CD4-positive, alpha-beta T cell (primary cell): ENCODE measurements at regions of chr6 and their contacts with region 1.

Region 1: GRCh38 chr6:118776607-118777549 is 117.1 kb upstream of the ASF1A start:
- DNase-seq: peak; percentile 35 to 84 (median 54)
- ATAC-seq: peak; percentile 94
- H3K4me3 ChIP-seq: no peak overlapping the region
- H3K4me3 Mint-ChIP-seq: peak overlapping the region; percentile 32
- H3K27ac ChIP-seq: no peak overlapping the region
- H3K27ac Mint-ChIP-seq: peak overlapping the region; percentile 4
- H3K4me1 ChIP-seq: peaks cover 11% of the 10 kb centered on the region
- H3K4me1 Mint-ChIP-seq: peaks cover 24% of the 10 kb centered on the region
- H3K27me3 ChIP-seq: no peaks in the 10 kb centered on the region
- H3K27me3 Mint-ChIP-seq: no peaks in the 10 kb centered on the region
- CTCF ChIP-seq: peak; percentile 87

Region 2: DNA sequence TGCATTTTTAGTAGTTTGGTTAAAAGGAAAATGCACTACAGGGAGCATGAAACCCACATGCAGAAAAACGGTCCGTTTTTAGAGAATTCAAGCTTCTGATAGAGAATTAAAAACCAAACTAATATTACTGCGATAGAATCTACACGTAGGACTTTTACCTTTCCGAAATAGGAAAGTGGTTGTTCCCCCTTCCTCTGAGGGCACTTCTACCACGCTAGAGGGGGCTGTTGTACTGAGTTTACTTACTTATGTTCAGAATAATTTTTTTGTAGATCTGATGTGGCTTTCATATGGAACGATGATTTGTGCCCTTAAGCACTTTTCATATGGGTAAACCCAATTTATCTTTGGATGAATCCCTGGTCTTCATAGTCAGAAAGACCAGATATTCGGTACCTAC is 493.1 kb before region 1 on chr6:
- CTCF ChIA-PET with region 1: no interaction called
- POLR2A ChIA-PET with region 1: no interaction called
- intact Hi-C with region 1: loop called in 1 of 2 experiments (anchors 5 kb)
- DNase-seq: peak in 13 of 14 experiments; percentile 9 to 74 (median 38)
- ATAC-seq: peak; percentile 59
- H3K4me3 ChIP-seq: no peak overlapping the region
- H3K4me3 Mint-ChIP-seq: no peak overlapping the region
- H3K27ac ChIP-seq: no peak overlapping the region
- H3K27ac Mint-ChIP-seq: no peak overlapping the region
- H3K4me1 ChIP-seq: no peaks in the 10 kb centered on the region
- H3K4me1 Mint-ChIP-seq: no peaks in the 10 kb centered on the region
- H3K27me3 ChIP-seq: no peaks in the 10 kb centered on the region
- H3K27me3 Mint-ChIP-seq: peaks cover 11% of the 10 kb centered on the region
- CTCF ChIP-seq: peak; percentile 67

Region 3: GRCh38 chr6:118565311-118565960 is 211.4 kb before region 1 on chr6:
- CTCF ChIA-PET with region 1: interaction called, 8 read pairs
- POLR2A ChIA-PET with region 1: interaction called, 4 read pairs
- intact Hi-C with region 1: loop called (anchors 1 to 2 kb)
- DNase-seq: peak in 5 of 14 experiments; percentile 22 to 81 (median 75)
- ATAC-seq: peak; percentile 97
- H3K4me3 ChIP-seq: no peak overlapping the region
- H3K4me3 Mint-ChIP-seq: no peak overlapping the region
- H3K27ac ChIP-seq: peak overlapping the region in 1 of 2 donors; percentile 5
- H3K27ac Mint-ChIP-seq: peak overlapping the region; percentile 72
- H3K4me1 ChIP-seq: peaks cover 7% of the 10 kb centered on the region
- H3K4me1 Mint-ChIP-seq: peaks cover 43% of the 10 kb centered on the region
- H3K27me3 ChIP-seq: no peaks in the 10 kb centered on the region
- H3K27me3 Mint-ChIP-seq: no peaks in the 10 kb centered on the region
- CTCF ChIP-seq: peak; percentile 63

Region 4: DNA sequence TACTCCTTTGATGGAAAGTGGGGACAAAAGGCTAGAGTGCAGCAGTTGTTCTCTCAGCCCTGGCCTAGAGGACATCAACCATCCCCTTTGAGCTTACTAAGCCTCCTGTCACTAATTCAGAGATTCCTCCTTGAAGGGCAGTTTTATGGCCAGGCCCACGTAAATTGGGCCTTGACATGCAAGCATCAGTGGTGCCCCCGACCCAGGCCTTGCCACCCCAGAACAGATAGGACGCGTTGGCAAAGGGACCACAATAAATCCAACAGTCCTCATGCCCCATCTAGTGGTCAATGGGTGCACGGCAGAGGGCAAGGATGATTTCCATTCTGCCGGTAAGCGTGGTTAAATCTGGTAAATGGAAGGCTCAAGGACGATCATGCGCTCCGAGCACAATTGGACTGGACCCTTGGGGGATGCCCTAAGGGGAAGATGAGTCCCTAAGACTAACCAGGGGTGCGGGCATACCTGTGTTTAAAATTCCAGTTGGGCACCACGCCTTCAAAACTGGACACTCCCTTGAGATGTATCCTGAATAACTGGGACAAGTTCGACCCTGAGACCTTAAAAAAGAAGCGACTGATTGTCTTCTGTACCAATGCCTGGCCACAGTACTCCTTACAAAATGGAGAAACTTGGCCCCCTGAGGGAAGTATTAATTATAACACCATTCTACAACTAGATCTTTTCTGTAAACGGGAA is 158.1 kb before region 1 on chr6:
- CTCF ChIA-PET with region 1: no interaction called
- POLR2A ChIA-PET with region 1: no interaction called
- intact Hi-C with region 1: loop called in 1 of 2 experiments (anchors 5 kb)
- DNase-seq: peak; percentile 38 to 78 (median 64)
- ATAC-seq: peak; percentile 97
- H3K4me3 ChIP-seq: no peak overlapping the region
- H3K4me3 Mint-ChIP-seq: peak overlapping the region; percentile 9
- H3K27ac ChIP-seq: no peak overlapping the region
- H3K27ac Mint-ChIP-seq: peak overlapping the region; percentile 62
- H3K4me1 ChIP-seq: peaks cover 28% of the 10 kb centered on the region
- H3K4me1 Mint-ChIP-seq: peaks cover 86% of the 10 kb centered on the region
- H3K27me3 ChIP-seq: no peaks in the 10 kb centered on the region
- H3K27me3 Mint-ChIP-seq: no peaks in the 10 kb centered on the region
- CTCF ChIP-seq: peak; percentile 76

Region 5: GRCh38 chr6:118651282-118652050 is 125.4 kb before region 1 on chr6 and contains the start of gene CEP85L:
- CTCF ChIA-PET with region 1: interaction called, 3 read pairs
- POLR2A ChIA-PET with region 1: interaction called, 3 read pairs
- intact Hi-C with region 1: loop called (anchors 1 to 5 kb)
- DNase-seq: peak; percentile 83 to 96 (median 90)
- ATAC-seq: peak; percentile 90
- H3K4me3 ChIP-seq: peak within 1 kb of the TSS; percentile 82
- H3K4me3 Mint-ChIP-seq: peak within 1 kb of the TSS; percentile 91
- H3K27ac ChIP-seq: peak within 1 kb of the TSS; percentile 78 to 87
- H3K27ac Mint-ChIP-seq: peak within 1 kb of the TSS; percentile 91
- H3K4me1 ChIP-seq: peaks cover 35% of the 10 kb centered on the region
- H3K4me1 Mint-ChIP-seq: peaks cover 59% of the 10 kb centered on the region
- H3K27me3 ChIP-seq: no peaks in the 10 kb centered on the region
- H3K27me3 Mint-ChIP-seq: no peaks in the 10 kb centered on the region
- CTCF ChIP-seq: no peak
- total RNA-seq, gene CEP85L: 76.2 to 80.7 TPM

Region 6: DNA sequence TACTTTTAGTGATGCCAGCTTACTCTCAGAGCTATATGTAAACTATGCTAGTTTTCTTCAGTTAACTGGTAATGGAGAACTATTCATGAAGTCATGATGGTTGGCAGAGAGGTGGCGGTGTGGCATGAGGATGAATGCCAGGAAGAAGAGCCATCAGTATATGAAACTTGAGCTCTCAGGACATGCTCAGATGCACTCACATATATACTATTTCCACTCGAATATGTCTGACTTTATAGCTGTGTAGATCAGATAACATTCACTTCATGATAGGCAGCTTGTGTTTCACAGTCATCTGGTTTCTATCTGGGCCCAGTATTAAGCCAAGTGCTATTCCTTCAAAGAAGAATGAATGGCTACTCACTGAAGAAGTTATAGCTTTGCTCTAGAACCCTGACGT is 79.3 kb before region 1 on chr6:
- CTCF ChIA-PET with region 1: no interaction called
- POLR2A ChIA-PET with region 1: no interaction called
- intact Hi-C with region 1: loop called in 1 of 2 experiments (anchors 5 kb)
- DNase-seq: peak in 5 of 14 experiments; percentile 12 to 44 (median 27)
- ATAC-seq: peak; percentile 68
- H3K4me3 ChIP-seq: no peak overlapping the region
- H3K4me3 Mint-ChIP-seq: no peak overlapping the region
- H3K27ac ChIP-seq: no peak overlapping the region
- H3K27ac Mint-ChIP-seq: peak overlapping the region; percentile 31
- H3K4me1 ChIP-seq: peaks cover 10% of the 10 kb centered on the region
- H3K4me1 Mint-ChIP-seq: peaks cover 90% of the 10 kb centered on the region
- H3K27me3 ChIP-seq: no peaks in the 10 kb centered on the region
- H3K27me3 Mint-ChIP-seq: no peaks in the 10 kb centered on the region
- CTCF ChIP-seq: no peak